Heart right ventricle (tissue), 16 donors: ENCODE measurements at regions of chr11 and their contacts with region 1.

Region 1: GRCh38 chr11:119891055-119891768 is 162.2 kb upstream of the NECTIN1 start:
- DNase-seq: peak; percentile 73 to 79
- ATAC-seq: peak; percentile 85 to 95 (median 92)
- H3K4me3 ChIP-seq: no peak overlapping the region
- H3K27ac ChIP-seq: peak overlapping the region in 9 of 10 donors; percentile 55 to 94 (median 78)
- H3K4me1 ChIP-seq: peaks cover 0 to 34% (median 14%) of the 10 kb centered on the region in 9 donors
- H3K27me3 ChIP-seq: peaks cover 0 to 18% (median 6%) of the 10 kb centered on the region in 7 donors
- CTCF ChIP-seq: no peak

Region 2: DNA sequence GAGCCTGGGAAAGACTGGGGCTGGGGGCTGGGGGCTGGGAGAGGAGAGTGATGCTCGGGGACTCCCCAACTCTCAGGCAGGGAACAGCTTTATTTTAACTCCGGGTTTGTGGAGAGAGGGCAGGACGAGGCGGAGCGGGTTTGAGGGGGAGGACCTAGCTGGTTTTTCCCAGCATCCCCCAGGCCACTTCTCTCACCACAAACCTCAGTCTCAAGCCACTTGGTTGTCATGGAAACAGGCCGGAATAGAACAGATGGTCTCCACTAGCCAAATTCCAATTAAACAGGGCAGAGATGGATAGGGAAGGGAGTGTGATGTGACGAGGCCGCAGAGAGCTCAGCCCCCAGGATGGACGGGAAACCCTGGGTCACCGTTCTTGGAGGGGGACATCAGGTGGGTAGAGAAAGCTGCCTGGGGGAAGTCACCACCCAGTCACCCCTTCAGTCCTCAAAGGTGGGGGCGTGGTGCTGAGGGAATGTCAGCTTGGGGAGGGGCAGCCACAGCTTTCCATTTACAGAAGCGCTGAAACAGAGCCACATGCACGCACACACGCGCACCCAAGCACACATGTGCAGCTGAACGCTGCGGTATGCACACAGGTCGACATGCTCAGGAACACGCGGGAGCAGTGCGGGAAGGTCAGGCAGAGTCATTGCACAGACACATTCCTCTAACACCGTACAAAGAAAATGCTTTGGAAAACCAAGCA is 181.4 kb before region 1 on chr11:
- intact Hi-C with region 1: no loop called
- DNase-seq: peak in 1 of 2 donors; percentile 65
- ATAC-seq: peak in 7 of 8 donors; percentile 50 to 87 (median 78)
- H3K4me3 ChIP-seq: no peak overlapping the region
- H3K27ac ChIP-seq: no peak overlapping the region
- H3K4me1 ChIP-seq: peaks cover 0 to 29% (median 0%) of the 10 kb centered on the region in 9 donors
- H3K27me3 ChIP-seq: no peaks in the 10 kb centered on the region
- CTCF ChIP-seq: no peak

Region 3: GRCh38 chr11:119759324-119759723 is 131.9 kb before region 1 on chr11:
- intact Hi-C with region 1: loop called in 1 of 10 experiments (anchors 10 kb)
- DNase-seq: no peak
- ATAC-seq: no peak
- H3K4me3 ChIP-seq: no peak overlapping the region
- H3K27ac ChIP-seq: no peak overlapping the region
- H3K4me1 ChIP-seq: peaks cover 0 to 10% (median 3%) of the 10 kb centered on the region in 9 donors
- H3K27me3 ChIP-seq: peaks cover 0 to 9% (median 0%) of the 10 kb centered on the region in 7 donors
- CTCF ChIP-seq: no peak

Region 4: GRCh38 chr11:119782739-119783072 is 108.5 kb before region 1 on chr11:
- intact Hi-C with region 1: loop called in 2 of 10 experiments (anchors 1 to 10 kb)
- DNase-seq: peak; percentile 24 to 41
- ATAC-seq: peak in 7 of 8 donors; percentile 12 to 50 (median 36)
- H3K4me3 ChIP-seq: no peak overlapping the region
- H3K27ac ChIP-seq: peak overlapping the region in 6 of 10 donors; percentile 6 to 62 (median 48)
- H3K4me1 ChIP-seq: peaks cover 0 to 42% (median 28%) of the 10 kb centered on the region in 9 donors
- H3K27me3 ChIP-seq: no peaks in the 10 kb centered on the region
- CTCF ChIP-seq: no peak

Region 5: DNA sequence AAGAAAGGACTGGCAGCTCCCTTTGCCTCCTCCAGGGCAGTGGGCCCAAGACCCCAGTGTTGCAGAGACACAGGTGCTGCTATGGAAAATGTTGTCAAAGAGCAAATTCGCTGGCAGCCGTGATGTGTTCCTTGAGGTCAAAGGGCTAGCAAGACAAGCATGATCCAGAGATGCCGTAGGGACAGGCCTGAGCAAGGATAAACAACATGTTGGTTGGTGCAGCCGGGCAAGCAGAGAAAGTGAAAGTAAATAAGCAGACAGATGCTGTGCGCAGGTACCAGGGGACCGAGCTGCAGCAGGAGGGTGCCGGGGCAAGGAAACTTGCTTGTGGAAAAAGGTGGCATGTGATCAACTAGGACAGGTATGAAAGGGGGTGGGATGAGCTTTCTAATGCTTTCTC is 36.7 kb before region 1 on chr11:
- intact Hi-C with region 1: loop called in 1 of 10 experiments (anchors 2 kb)
- DNase-seq: no peak
- ATAC-seq: peak in 1 of 8 donors; percentile 25
- H3K4me3 ChIP-seq: no peak overlapping the region
- H3K27ac ChIP-seq: peak overlapping the region in 5 of 10 donors; percentile 6 to 55 (median 32)
- H3K4me1 ChIP-seq: peaks cover 0 to 10% (median 0%) of the 10 kb centered on the region in 9 donors
- H3K27me3 ChIP-seq: peaks cover 0 to 19% (median 6%) of the 10 kb centered on the region in 7 donors
- CTCF ChIP-seq: no peak

Region 6: GRCh38 chr11:119942583-119943297 is 51.5 kb after region 1 on chr11:
- intact Hi-C with region 1: loop called in 1 of 10 experiments (anchors 5 kb)
- DNase-seq: no peak
- ATAC-seq: no peak
- H3K4me3 ChIP-seq: no peak overlapping the region
- H3K27ac ChIP-seq: no peak overlapping the region
- H3K4me1 ChIP-seq: peaks cover 0 to 12% (median 4%) of the 10 kb centered on the region in 9 donors
- H3K27me3 ChIP-seq: peaks cover 0 to 16% (median 0%) of the 10 kb centered on the region in 7 donors
- CTCF ChIP-seq: no peak

Region 7: DNA sequence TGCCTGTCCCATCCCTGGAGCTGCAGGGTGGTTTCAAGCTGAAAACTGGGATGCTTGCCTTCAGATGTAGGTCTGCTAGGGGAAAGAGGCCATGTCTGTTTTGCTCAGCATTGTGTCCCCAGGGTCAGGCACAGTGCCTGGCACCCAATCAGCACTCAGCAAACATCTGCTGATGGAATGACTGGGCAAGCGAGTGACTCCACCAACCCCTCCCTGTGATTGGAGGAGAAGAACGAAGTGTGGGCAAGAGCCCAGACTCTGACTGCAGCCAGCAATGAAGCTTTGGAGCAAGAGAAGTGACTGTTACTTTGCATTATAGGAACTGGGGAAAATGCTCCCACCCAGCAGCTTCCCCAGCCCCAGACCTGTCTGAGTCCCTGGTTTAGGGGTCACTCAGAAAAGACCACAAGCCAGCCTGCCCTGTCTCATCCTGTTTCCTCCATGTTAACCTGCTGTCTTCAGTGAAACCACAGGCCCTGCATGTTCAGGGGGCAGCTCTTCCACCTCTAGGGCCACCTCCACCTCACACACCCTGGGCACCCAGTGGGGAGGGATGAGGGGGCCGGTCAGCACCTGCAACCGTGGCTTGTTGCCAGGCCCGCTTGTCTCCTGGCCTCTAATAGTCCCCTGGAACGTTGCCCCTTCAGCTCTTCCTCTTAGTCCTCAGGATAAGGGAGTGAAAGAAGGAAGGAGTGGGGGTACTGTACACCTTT is 99.3 kb after region 1 on chr11:
- intact Hi-C with region 1: no loop called
- DNase-seq: peak; percentile 50
- ATAC-seq: peak; percentile 73 to 92 (median 84)
- H3K4me3 ChIP-seq: no peak overlapping the region
- H3K27ac ChIP-seq: peak overlapping the region in 2 of 10 donors; percentile 35 to 39
- H3K4me1 ChIP-seq: peaks cover 0 to 31% (median 15%) of the 10 kb centered on the region in 9 donors
- H3K27me3 ChIP-seq: peaks cover 0 to 17% (median 2%) of the 10 kb centered on the region in 7 donors
- CTCF ChIP-seq: no peak